ENCODE measurements at regions of chr2 and their contacts with region 1.

Region 1: DNA sequence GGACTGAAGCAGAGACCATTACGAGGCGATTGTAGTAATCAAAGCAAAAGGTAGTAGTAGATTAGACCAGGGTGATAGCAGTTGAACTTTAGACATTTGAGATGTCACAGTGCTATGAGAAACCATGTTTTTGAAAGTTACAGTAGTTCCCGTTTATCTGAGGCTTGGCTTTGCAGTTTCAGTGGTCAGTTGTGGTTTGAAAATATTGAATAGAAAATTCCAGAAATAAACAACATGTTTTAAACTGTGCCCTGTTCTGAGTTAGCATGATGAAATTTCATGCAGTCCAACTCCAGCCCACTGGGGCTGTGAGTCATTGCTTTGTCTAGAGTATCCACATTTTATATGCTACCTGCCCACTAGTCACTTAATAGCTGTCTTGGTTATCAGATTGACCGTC is 47.5 kb downstream of the ZNF638 start:
- DNase-seq: no peak
- H3K4me3 ChIP-seq: no peak overlapping the region
- H3K4me3 Mint-ChIP-seq: no peak overlapping the region
- H3K27ac Mint-ChIP-seq: peak overlapping the region; percentile 64
- H3K4me1 ChIP-seq: peaks cover 35% of the 10 kb centered on the region
- H3K4me1 Mint-ChIP-seq: peaks cover 33% of the 10 kb centered on the region
- H3K27me3 ChIP-seq: no peaks in the 10 kb centered on the region
- H3K27me3 Mint-ChIP-seq: no peaks in the 10 kb centered on the region
- CTCF ChIP-seq: peak in 1 of 2 experiments; percentile 7

Region 2: GRCh38 chr2:71269511-71270090 is 109.5 kb before region 1 on chr2:
- CTCF ChIA-PET with region 1: no interaction called
- POLR2A ChIA-PET with region 1: no interaction called
- intact Hi-C with region 1: no loop called
- DNase-seq: no peak
- H3K4me3 ChIP-seq: no peak overlapping the region
- H3K4me3 Mint-ChIP-seq: no peak overlapping the region
- H3K27ac Mint-ChIP-seq: no peak overlapping the region
- H3K4me1 ChIP-seq: no peaks in the 10 kb centered on the region
- H3K4me1 Mint-ChIP-seq: no peaks in the 10 kb centered on the region
- H3K27me3 ChIP-seq: no peaks in the 10 kb centered on the region
- H3K27me3 Mint-ChIP-seq: peaks cover 14% of the 10 kb centered on the region
- CTCF ChIP-seq: no peak

Region 3: GRCh38 chr2:71395471-71395870 is 16.4 kb after region 1 on chr2:
- CTCF ChIA-PET with region 1: no interaction called
- POLR2A ChIA-PET with region 1: no interaction called
- intact Hi-C with region 1: loop called (anchors 1 kb)
- DNase-seq: peak; percentile 86 to 88
- H3K4me3 ChIP-seq: no peak overlapping the region
- H3K4me3 Mint-ChIP-seq: peak overlapping the region; percentile 27
- H3K27ac Mint-ChIP-seq: peak overlapping the region; percentile 79
- H3K4me1 ChIP-seq: peaks cover 29% of the 10 kb centered on the region
- H3K4me1 Mint-ChIP-seq: peaks cover 27% of the 10 kb centered on the region
- H3K27me3 ChIP-seq: no peaks in the 10 kb centered on the region
- H3K27me3 Mint-ChIP-seq: no peaks in the 10 kb centered on the region
- CTCF ChIP-seq: no peak

Region 4: GRCh38 chr2:71452565-71452964 is 73.5 kb after region 1 on chr2:
- CTCF ChIA-PET with region 1: no interaction called
- POLR2A ChIA-PET with region 1: no interaction called
- intact Hi-C with region 1: no loop called
- DNase-seq: peak; percentile 70 to 81
- H3K4me3 ChIP-seq: no peak overlapping the region
- H3K4me3 Mint-ChIP-seq: peak overlapping the region; percentile 26
- H3K27ac Mint-ChIP-seq: no peak overlapping the region
- H3K4me1 ChIP-seq: peaks cover 18% of the 10 kb centered on the region
- H3K4me1 Mint-ChIP-seq: peaks cover 23% of the 10 kb centered on the region
- H3K27me3 ChIP-seq: no peaks in the 10 kb centered on the region
- H3K27me3 Mint-ChIP-seq: no peaks in the 10 kb centered on the region
- CTCF ChIP-seq: peak; percentile 37 to 51

Measured in Caco-2 (cell line).